Dorsolateral prefrontal cortex (tissue), 120 donors: ENCODE measurements at regions of chr5 and their contacts with region 1.

Region 1: DNA sequence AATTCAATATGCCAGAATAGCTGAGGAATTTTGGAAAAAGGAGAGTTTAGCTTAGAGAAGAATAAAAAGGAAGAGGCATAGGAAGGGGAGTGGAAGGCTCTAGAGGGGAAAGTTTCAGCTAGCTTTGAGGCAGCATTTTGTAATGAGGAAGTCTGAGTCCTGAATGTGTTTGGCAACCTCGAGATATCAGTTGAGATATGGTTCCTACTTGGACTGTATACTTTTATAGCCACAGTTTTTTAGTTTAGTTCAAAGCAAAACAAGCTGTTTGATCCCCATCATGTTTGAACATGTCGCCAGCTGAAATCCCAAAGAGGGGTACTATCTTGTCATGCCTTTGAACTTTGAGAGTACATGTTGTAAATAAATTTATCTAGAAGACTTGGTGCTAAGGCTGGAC is 559.0 kb upstream of the FTMT start:
- DNase-seq: no peak
- H3K4me3 ChIP-seq: no peak overlapping the region
- H3K27ac ChIP-seq: no peak overlapping the region
- H3K27me3 ChIP-seq: no peaks in the 10 kb centered on the region
- CTCF ChIP-seq: no peak

Region 2: DNA sequence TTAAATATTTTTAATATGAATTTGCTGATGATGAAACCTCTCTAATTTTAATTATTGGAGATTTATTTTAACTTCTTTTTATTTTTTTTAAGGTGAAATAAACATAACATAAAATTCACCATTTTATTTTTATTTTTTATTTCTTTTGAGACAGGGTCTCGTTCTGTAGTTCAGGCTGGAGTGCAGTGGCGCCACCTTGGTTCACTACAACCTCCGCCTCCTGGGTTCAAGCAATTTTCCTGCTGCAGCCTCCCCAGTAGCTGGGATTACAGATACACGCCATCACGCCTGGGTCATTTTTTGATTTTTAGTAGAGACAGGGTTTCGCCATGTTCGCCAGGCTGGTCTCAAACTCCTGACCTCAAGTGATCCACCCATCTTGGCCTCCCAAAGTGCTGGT is 425.7 kb before region 1 on chr5:
- intact Hi-C with region 1: loop called in 1 of 2 experiments (anchors 5 kb)
- DNase-seq: no peak
- H3K4me3 ChIP-seq: no peak overlapping the region
- H3K27ac ChIP-seq: no peak overlapping the region
- H3K27me3 ChIP-seq: no peaks in the 10 kb centered on the region
- CTCF ChIP-seq: no peak

Region 3: GRCh38 chr5:120913396-120913795 is 379.3 kb before region 1 on chr5:
- intact Hi-C with region 1: no loop called
- DNase-seq: no peak
- H3K4me3 ChIP-seq: no peak overlapping the region
- H3K27ac ChIP-seq: no peak overlapping the region
- H3K27me3 ChIP-seq: peaks cover 0 to 6% (median 0%) of the 10 kb centered on the region in 45 donors
- CTCF ChIP-seq: no peak

Region 4: GRCh38 chr5:121408778-121409177 is 116.1 kb after region 1 on chr5:
- intact Hi-C with region 1: no loop called
- DNase-seq: no peak
- H3K4me3 ChIP-seq: no peak overlapping the region
- H3K27ac ChIP-seq: no peak overlapping the region
- H3K27me3 ChIP-seq: no peaks in the 10 kb centered on the region
- CTCF ChIP-seq: no peak